ENCODE measurements at regions of chr13 and their contacts with region 1.

Region 1: GRCh38 chr13:110875241-110875640 is 39.6 kb downstream of the ANKRD10 start:
- H3K4me3 ChIP-seq: no peak overlapping the region
- H3K27ac ChIP-seq: no peak overlapping the region
- H3K4me1 ChIP-seq: no peaks in the 10 kb centered on the region; the same call in 1 of the 2 replicates
- CTCF ChIP-seq: no peak

Region 2: GRCh38 chr13:110274687-110275086 is 600.6 kb before region 1 on chr13:
- CTCF ChIA-PET with region 1: no interaction called
- POLR2A ChIA-PET with region 1: no interaction called
- H3K4me3 ChIP-seq: no peak overlapping the region
- H3K27ac ChIP-seq: no peak overlapping the region
- H3K4me1 ChIP-seq: no peaks in the 10 kb centered on the region
- CTCF ChIP-seq: no peak

Region 3: GRCh38 chr13:110538632-110539031 is 336.6 kb before region 1 on chr13:
- CTCF ChIA-PET with region 1: no interaction called
- POLR2A ChIA-PET with region 1: interaction called, 11 read pairs
- H3K4me3 ChIP-seq: no peak overlapping the region
- H3K27ac ChIP-seq: no peak overlapping the region
- H3K4me1 ChIP-seq: no peaks in the 10 kb centered on the region
- CTCF ChIP-seq: no peak